Activated CD4-positive, alpha-beta memory T cell treated with anti-CD3 and anti-CD28 coated beads, Interleukin-2, amount 10 ng/mL, durations not matched to agents 7 days and 5 days (primary cell): ENCODE measurements at regions of chr11 and their contacts with region 1.

Region 1: GRCh38 chr11:44538375-44539054 is 26.9 kb upstream of the CD82 start:
- DNase-seq: peak; percentile 78
- H3K4me3 Mint-ChIP-seq: no peak overlapping the region
- H3K27ac Mint-ChIP-seq: no peak overlapping the region
- H3K4me1 Mint-ChIP-seq: no peaks in the 10 kb centered on the region
- H3K27me3 Mint-ChIP-seq: peaks cover 3% of the 10 kb centered on the region

Region 2: DNA sequence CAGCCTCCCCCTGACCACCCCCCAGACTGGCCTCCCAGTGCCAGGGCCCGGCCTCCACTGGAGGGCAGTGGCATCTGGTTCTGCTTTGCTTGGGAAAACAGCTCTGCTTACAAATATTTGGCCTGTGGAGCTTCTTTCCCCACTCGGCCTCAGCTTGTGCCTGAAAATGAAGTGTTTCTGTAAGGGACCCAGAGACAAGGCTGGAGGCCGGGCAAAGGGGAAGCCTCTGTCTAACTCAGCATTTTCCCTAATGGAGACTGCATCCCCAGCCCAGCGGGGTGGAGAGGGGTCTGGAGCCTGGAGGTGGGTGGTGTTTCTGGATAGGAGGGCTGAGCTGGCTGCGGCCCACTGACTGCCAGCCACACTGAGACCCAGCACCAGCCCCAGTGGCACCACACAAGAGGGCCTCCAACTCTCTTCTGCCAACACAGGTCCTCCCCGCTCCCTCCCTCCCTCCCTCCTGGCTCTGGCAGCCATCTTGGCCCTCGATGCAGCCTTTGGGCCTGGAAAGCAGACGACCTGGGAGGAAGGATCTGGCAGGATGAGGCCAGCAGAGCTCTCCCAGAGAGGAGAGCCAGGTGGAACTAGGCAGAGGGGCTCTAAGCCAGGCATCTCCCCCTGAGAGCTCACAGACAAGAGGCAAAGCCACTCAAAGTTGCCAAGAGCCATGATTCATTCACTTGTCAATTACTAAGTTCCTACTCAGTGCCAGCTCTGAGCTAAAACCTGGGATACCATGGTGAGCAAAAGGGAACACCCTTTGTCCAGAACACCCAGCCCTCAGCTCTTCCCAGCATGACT is 50.1 kb before region 1 on chr11:
- CTCF ChIA-PET with region 1: no interaction called
- POLR2A ChIA-PET with region 1: no interaction called
- DNase-seq: no peak
- H3K4me3 Mint-ChIP-seq: no peak overlapping the region
- H3K27ac Mint-ChIP-seq: no peak overlapping the region
- H3K4me1 Mint-ChIP-seq: no peaks in the 10 kb centered on the region
- H3K27me3 Mint-ChIP-seq: peaks cover 11% of the 10 kb centered on the region

Region 3: GRCh38 chr11:44524751-44525201 is 13.7 kb before region 1 on chr11:
- CTCF ChIA-PET with region 1: interaction called, 104 read pairs
- POLR2A ChIA-PET with region 1: interaction called, 3 read pairs
- DNase-seq: no peak
- H3K4me3 Mint-ChIP-seq: no peak overlapping the region
- H3K27ac Mint-ChIP-seq: no peak overlapping the region
- H3K4me1 Mint-ChIP-seq: peaks cover 25% of the 10 kb centered on the region
- H3K27me3 Mint-ChIP-seq: peaks cover 21% of the 10 kb centered on the region